ENCODE measurements at regions of chr6 and their contacts with region 1.

Region 1: GRCh38 chr6:139655790-139656687 is 281.6 kb upstream of the CITED2 start:
- DNase-seq: peak; percentile 43 to 84
- H3K4me3 ChIP-seq: no peak overlapping the region
- H3K27ac ChIP-seq: no peak overlapping the region
- H3K4me1 ChIP-seq: peaks cover 30% of the 10 kb centered on the region
- H3K27me3 ChIP-seq: no peaks in the 10 kb centered on the region
- CTCF ChIP-seq: no peak

Region 2: GRCh38 chr6:139433631-139434419 is 222.2 kb before region 1 on chr6:
- CTCF ChIA-PET with region 1: no interaction called
- POLR2A ChIA-PET with region 1: no interaction called
- intact Hi-C with region 1: loop called (anchors 5 kb)
- DNase-seq: peak in 1 of 2 experiments; percentile 89
- H3K4me3 ChIP-seq: no peak overlapping the region
- H3K27ac ChIP-seq: peak overlapping the region; percentile 33
- H3K4me1 ChIP-seq: peaks cover 53% of the 10 kb centered on the region
- H3K27me3 ChIP-seq: no peaks in the 10 kb centered on the region
- CTCF ChIP-seq: no peak